B cell (primary cell): ENCODE measurements at regions of chr18 and their contacts with region 1.

Region 1: DNA sequence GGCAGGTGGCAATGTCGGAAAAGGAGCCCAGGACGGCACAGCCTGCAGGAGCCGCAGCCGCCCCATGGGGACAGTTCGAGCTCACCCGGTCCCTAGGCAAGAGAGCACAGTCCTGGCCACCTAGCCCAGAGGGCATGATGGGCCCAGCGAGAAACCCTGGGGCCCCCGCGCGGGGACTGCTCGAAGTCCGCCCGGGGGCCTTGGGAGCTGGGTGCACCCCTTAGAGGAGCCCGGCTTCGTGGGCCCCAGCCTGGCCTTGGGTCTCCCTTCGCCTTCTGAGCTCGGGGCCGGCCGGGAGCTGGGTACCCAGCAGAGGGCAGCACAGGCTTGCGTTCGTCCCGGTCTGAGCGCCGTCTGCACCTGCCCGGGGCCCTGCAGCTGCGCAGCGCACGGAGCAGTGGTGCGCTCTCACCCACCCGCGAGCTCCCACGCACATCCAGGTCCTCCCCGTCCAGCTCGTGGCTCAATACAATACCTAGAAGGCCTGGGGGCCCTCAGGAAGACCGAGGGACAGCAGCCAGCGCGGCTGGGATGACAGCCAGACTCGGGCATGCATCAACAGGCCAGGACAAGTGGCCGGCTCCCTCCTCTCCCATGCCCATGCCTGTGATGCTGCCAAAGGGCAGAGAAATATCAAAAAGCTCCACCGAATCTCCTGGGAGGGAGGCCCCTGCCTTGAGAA is 96.2 kb upstream of the ZNF532 start:
- DNase-seq: peak; percentile 85
- ATAC-seq: peak; percentile 83
- H3K4me3 ChIP-seq: peak overlapping the region in 3 of 5 experiments; percentile 12 to 44 (median 35)
- H3K4me3 Mint-ChIP-seq: peak overlapping the region; percentile 70
- H3K27ac ChIP-seq: no peak overlapping the region
- H3K27ac Mint-ChIP-seq: no peak overlapping the region
- H3K4me1 ChIP-seq: peaks cover 3 to 13% of the 10 kb centered on the region in 2 donors
- H3K4me1 Mint-ChIP-seq: peaks cover 11% of the 10 kb centered on the region
- H3K27me3 ChIP-seq: peaks cover 0 to 35% (median 3%) of the 10 kb centered on the region in 4 experiments
- H3K27me3 Mint-ChIP-seq: peaks cover 25% of the 10 kb centered on the region
- CTCF ChIP-seq: peak; percentile 66

Region 2: GRCh38 chr18:58180738-58181353 is 587.6 kb before region 1 on chr18:
- CTCF ChIA-PET with region 1: interaction called, 19 read pairs
- POLR2A ChIA-PET with region 1: no interaction called
- intact Hi-C with region 1: no loop called
- DNase-seq: peak; percentile 71
- ATAC-seq: peak; percentile 62
- H3K4me3 ChIP-seq: no peak overlapping the region
- H3K4me3 Mint-ChIP-seq: no peak overlapping the region
- H3K27ac ChIP-seq: no peak overlapping the region
- H3K27ac Mint-ChIP-seq: no peak overlapping the region
- H3K4me1 ChIP-seq: no peaks in the 10 kb centered on the region
- H3K4me1 Mint-ChIP-seq: peaks cover 3% of the 10 kb centered on the region
- H3K27me3 ChIP-seq: no peaks in the 10 kb centered on the region
- H3K27me3 Mint-ChIP-seq: no peaks in the 10 kb centered on the region
- CTCF ChIP-seq: peak; percentile 94

Region 3: DNA sequence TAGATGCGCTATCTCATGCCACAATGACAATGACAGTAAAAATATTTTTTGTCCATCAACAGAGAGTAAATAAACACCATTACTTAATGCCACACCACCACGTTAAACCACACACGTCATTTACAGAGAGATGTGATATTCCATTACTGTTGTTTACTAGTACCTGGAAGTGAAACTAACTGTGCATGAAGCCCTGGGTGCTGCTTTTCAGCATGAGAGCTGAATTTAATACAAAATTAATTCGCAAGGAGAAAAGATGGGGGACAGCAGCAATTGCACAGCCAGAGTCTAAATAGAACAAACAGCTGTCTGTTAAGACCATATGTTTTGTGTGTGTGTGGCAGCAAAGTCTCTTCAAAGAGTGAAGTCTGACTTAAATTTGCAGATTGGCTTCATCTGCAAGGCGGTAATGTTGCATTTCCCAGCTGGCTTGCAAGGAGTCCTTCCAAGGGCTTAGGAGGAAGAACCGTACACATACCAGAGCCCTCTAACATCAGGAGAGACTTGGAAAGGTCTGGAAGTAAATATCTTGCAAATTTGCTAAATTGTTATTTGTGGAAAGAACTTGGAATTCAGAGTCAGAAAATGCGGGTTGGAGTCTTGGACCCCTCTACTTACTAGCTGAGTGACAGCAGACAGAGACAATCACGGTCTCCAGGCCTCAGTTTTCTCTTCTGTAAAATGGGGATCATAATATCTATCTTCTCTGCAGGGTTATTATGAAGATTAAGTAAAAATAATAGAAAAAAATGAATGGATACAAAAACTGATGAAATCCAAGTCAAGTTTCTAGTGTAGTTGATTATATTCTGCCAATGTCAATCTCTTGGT is 267.2 kb before region 1 on chr18:
- CTCF ChIA-PET with region 1: interaction called, 13 read pairs
- POLR2A ChIA-PET with region 1: no interaction called
- intact Hi-C with region 1: no loop called
- DNase-seq: peak; percentile 48
- ATAC-seq: peak; percentile 69
- H3K4me3 ChIP-seq: no peak overlapping the region
- H3K4me3 Mint-ChIP-seq: peak overlapping the region; percentile 24
- H3K27ac ChIP-seq: no peak overlapping the region
- H3K27ac Mint-ChIP-seq: peak overlapping the region; percentile 57
- H3K4me1 ChIP-seq: peaks cover 14 to 21% of the 10 kb centered on the region in 2 donors
- H3K4me1 Mint-ChIP-seq: peaks cover 8% of the 10 kb centered on the region
- H3K27me3 ChIP-seq: peaks cover 0 to 8% (median 4%) of the 10 kb centered on the region in 4 experiments
- H3K27me3 Mint-ChIP-seq: peaks cover 10% of the 10 kb centered on the region
- CTCF ChIP-seq: no peak

Region 4: GRCh38 chr18:58552057-58552461 is 216.4 kb before region 1 on chr18:
- CTCF ChIA-PET with region 1: no interaction called
- POLR2A ChIA-PET with region 1: no interaction called
- intact Hi-C with region 1: no loop called
- DNase-seq: peak; percentile 83
- ATAC-seq: peak; percentile 80
- H3K4me3 ChIP-seq: no peak overlapping the region
- H3K4me3 Mint-ChIP-seq: peak overlapping the region; percentile 60
- H3K27ac ChIP-seq: peak overlapping the region in 1 of 2 donors; percentile 9
- H3K27ac Mint-ChIP-seq: peak overlapping the region; percentile 50
- H3K4me1 ChIP-seq: peaks cover 30 to 37% of the 10 kb centered on the region in 2 donors
- H3K4me1 Mint-ChIP-seq: peaks cover 40% of the 10 kb centered on the region
- H3K27me3 ChIP-seq: no peaks in the 10 kb centered on the region
- H3K27me3 Mint-ChIP-seq: no peaks in the 10 kb centered on the region
- CTCF ChIP-seq: no peak

Region 5: DNA sequence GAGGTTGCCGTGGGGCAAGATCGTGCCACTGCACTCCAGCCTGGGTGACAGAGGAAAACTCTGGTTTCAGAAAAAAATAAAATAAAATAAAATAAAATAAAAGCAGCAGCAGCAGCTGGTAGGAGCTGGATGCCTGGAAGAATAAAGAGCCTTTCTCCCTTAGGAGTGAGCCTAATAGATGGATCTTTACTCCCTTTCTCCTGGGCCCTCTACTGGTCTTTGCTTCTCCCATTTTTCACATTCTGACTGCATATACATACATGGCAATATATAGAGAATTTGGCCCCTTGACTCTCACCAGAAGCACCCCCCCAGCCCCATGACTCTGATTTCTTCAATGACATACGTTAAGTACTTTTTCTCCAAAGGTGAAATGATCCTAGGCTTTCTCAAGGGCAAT is 107.0 kb before region 1 on chr18:
- CTCF ChIA-PET with region 1: interaction called, 4 read pairs
- POLR2A ChIA-PET with region 1: no interaction called
- intact Hi-C with region 1: loop called (anchors 1 kb)
- DNase-seq: no peak
- ATAC-seq: no peak
- H3K4me3 ChIP-seq: peak overlapping the region in 1 of 5 experiments; percentile 43
- H3K4me3 Mint-ChIP-seq: peak overlapping the region; percentile 52
- H3K27ac ChIP-seq: peak overlapping the region in 1 of 2 donors; percentile 85
- H3K27ac Mint-ChIP-seq: peak overlapping the region; percentile 66
- H3K4me1 ChIP-seq: peaks cover 78% of the 10 kb centered on the region in 2 donors
- H3K4me1 Mint-ChIP-seq: peaks cover 82% of the 10 kb centered on the region
- H3K27me3 ChIP-seq: no peaks in the 10 kb centered on the region
- H3K27me3 Mint-ChIP-seq: no peaks in the 10 kb centered on the region
- CTCF ChIP-seq: no peak

Region 6: GRCh38 chr18:58748899-58749595 is 19.4 kb before region 1 on chr18:
- CTCF ChIA-PET with region 1: interaction called, 75 read pairs
- POLR2A ChIA-PET with region 1: no interaction called
- intact Hi-C with region 1: no loop called
- DNase-seq: no peak
- ATAC-seq: no peak
- H3K4me3 ChIP-seq: no peak overlapping the region
- H3K4me3 Mint-ChIP-seq: no peak overlapping the region
- H3K27ac ChIP-seq: no peak overlapping the region
- H3K27ac Mint-ChIP-seq: no peak overlapping the region
- H3K4me1 ChIP-seq: no peaks in the 10 kb centered on the region
- H3K4me1 Mint-ChIP-seq: peaks cover 14% of the 10 kb centered on the region
- H3K27me3 ChIP-seq: no peaks in the 10 kb centered on the region
- H3K27me3 Mint-ChIP-seq: no peaks in the 10 kb centered on the region
- CTCF ChIP-seq: no peak

Region 7: GRCh38 chr18:59070181-59070912 is 301.9 kb after region 1 on chr18:
- CTCF ChIA-PET with region 1: interaction called, 132 read pairs
- POLR2A ChIA-PET with region 1: no interaction called
- intact Hi-C with region 1: loop called (anchors 1 kb)
- DNase-seq: peak; percentile 85
- ATAC-seq: peak; percentile 90
- H3K4me3 ChIP-seq: no peak overlapping the region
- H3K4me3 Mint-ChIP-seq: no peak overlapping the region
- H3K27ac ChIP-seq: no peak overlapping the region
- H3K27ac Mint-ChIP-seq: no peak overlapping the region
- H3K4me1 ChIP-seq: peaks cover 12 to 20% of the 10 kb centered on the region in 2 donors
- H3K4me1 Mint-ChIP-seq: peaks cover 14% of the 10 kb centered on the region
- H3K27me3 ChIP-seq: no peaks in the 10 kb centered on the region
- H3K27me3 Mint-ChIP-seq: no peaks in the 10 kb centered on the region
- CTCF ChIP-seq: peak; percentile 90